ENCODE measurements at regions of chr22 and their contacts with region 1.

Region 1: DNA sequence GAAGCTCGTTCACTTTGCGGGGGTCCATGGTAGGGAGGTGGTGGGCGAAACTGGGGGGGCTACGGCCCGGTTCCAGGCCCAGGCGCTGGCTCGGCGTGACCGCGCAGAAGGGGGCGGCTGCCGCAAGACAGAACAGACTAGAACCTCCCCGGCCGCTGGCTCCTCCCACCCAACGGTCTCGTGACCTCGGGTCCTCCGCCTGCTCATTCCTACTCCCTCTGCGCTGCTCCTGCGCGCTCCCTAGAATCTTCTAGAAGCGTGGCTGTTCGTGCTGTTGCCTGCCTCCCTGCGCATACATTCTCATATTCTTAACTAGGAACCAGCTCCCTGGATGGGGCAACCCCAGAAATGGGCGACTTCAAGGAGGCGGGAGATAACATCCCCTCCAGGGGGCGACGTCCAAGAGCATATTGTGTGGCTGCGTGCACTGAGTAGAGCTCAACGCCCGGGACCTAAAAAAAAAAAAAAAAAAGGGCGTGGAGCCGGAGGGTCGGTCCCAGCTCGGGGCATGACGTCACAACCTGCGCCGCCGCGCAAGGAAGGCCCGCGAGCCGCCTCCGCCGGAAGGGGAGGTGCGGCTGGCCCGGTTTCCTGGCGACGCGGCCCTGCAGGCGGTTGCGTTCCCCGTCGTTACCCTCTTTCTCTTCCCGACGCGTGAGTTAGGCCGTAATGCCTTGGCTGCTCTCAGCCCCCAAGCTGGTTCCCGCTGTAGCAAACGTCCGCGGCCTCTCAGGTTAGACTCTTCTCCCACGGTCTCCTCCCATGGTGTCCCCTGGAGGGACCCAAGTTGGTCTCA is at the starts of genes ST13 and XPNPEP3:
- DNase-seq: peak; percentile 99
- ATAC-seq: peak; percentile 92
- H3K4me3 Mint-ChIP-seq: peak within 1 kb of the TSS; percentile 99
- H3K27ac Mint-ChIP-seq: peak within 1 kb of the TSS; percentile 100
- H3K4me1 Mint-ChIP-seq: peaks cover 37% of the 10 kb centered on the region
- H3K27me3 Mint-ChIP-seq: no peaks in the 10 kb centered on the region
- total RNA-seq, gene ST13: 131 to 138 TPM
- total RNA-seq, gene XPNPEP3: 14.7 to 15.1 TPM

Region 2: DNA sequence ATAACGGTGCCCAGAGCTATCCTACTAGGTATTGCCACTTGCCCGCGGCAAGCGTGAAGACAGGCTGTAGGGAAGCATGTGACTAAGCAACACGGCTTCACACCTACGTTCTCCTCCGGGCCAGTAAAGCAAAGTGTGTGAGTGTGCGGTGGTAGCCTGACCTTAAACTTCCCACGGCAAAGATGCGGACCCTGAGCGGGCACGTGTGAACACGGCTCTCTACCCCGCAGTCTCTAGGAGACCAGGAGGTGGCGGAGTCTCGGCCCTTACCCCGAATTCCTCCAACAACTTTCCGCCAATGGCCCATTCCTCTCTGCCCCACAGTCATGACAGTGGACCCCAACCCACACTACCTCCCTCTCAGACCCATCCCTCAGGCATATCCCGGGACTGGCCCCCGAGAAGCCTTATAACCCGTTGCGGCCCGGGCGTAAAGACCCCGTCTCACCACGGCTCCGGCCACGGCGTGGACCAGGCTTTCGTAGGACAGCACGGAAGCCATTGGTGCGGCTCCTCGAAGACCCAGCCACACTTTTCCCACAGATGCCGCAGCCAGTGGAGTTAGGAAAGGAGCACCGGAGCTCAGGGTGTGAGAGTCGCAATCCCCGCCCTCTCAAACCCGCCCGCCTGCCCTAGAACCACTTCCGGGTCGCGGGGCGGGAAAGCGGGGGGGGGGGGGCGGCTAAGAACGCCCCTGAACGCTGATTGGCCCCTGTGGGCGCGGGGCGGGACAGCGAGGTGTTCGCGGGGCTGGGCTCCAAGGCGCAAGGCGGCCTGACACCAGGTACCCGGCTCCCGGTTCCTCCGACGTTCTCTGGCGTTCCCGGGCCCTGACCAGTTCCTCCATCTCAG is 37.7 kb before region 1 on chr22 and contains the start of gene SLC25A17:
- POLR2A ChIA-PET with region 1: interaction called, 10 read pairs
- DNase-seq: peak; percentile 90
- ATAC-seq: peak; percentile 89
- H3K4me3 Mint-ChIP-seq: peak within 1 kb of the TSS; percentile 88
- H3K27ac Mint-ChIP-seq: peak within 1 kb of the TSS; percentile 80
- H3K4me1 Mint-ChIP-seq: peaks cover 21% of the 10 kb centered on the region
- H3K27me3 Mint-ChIP-seq: no peaks in the 10 kb centered on the region
- total RNA-seq, gene SLC25A17: 17.8 to 20.6 TPM

Region 3: GRCh38 chr22:40867109-40867508 is 10.4 kb after region 1 on chr22:
- POLR2A ChIA-PET with region 1: interaction called, 11 read pairs
- DNase-seq: no peak
- ATAC-seq: no peak
- H3K4me3 Mint-ChIP-seq: no peak overlapping the region
- H3K27ac Mint-ChIP-seq: no peak overlapping the region
- H3K4me1 Mint-ChIP-seq: peaks cover 7% of the 10 kb centered on the region
- H3K27me3 Mint-ChIP-seq: no peaks in the 10 kb centered on the region

Region 4: DNA sequence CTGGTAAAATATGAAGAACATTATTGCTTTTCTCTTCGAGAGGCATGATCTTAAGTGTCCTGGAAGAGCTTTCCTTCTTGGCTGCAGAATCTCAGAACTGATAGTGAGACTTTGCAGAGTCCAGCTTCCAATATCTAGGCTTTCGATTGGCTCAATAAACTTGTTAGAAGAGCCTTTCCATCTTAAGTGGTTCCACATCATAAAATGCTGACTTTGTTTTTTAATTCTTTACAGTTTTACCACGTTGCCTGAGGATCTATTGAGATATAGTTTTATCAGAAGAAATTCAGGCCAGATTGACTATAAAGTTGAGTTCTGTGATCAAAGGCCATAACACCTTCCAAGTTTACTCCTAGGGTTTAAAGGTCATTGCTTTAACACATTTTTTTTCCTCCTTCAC is 20.8 kb after region 1 on chr22:
- POLR2A ChIA-PET with region 1: no interaction called
- DNase-seq: no peak
- ATAC-seq: no peak
- H3K4me3 Mint-ChIP-seq: no peak overlapping the region
- H3K27ac Mint-ChIP-seq: no peak overlapping the region
- H3K4me1 Mint-ChIP-seq: no peaks in the 10 kb centered on the region
- H3K27me3 Mint-ChIP-seq: no peaks in the 10 kb centered on the region